G401 (cell line): ENCODE measurements at regions of chr10 and their contacts with region 1.

Region 1: DNA sequence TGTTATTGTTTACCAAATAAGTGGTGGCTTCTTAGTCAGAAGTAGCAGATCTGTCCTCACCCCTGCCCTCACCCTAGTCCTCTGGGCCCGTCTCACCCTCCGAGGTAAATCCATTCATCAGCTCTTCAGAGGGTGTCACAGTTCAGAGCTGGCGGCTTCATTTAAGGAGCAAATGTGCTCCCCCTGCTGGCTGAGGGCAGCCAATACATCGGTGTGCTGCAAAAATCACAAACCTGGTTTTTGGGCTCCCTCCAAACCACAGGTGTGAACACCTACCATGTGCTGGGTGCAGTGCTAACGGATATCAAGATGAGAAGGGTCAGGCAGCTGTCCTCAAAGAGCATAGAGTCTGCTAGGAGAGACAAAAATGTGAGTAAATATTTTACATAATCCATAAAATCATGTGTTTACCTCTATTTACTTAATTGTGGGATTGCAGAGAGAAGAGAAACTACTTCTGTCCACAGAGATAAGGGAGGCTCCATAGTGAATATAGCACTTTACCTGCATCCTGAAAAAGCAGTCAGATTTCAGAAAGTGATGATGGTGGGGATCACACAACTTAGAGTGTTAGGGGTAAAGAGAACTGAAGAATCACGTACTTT is 15.5 kb upstream of the CRTAC1 start:
- DNase-seq: peak; percentile 85

Region 2: DNA sequence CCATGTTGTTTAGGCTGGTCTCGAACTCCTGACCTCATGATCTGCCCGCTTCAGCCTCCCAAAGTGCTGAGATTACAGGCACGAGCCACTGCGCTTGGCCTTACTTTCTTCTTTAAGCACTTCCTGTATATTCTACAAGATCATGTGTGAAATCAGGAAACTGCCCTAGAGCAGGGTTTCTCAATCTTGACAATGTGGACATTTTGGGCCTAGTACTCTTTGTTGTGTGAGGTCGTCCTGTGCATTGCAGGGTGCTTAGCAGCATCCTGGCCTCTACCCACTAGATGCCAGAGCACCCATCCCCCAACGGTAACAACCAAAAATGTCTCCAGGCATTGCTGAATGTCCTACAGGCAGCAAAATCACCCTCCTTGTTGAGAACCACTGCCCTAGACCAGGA is 669.5 kb before region 1 on chr10:
- in situ Hi-C with region 1: no loop called
- DNase-seq: no peak

Region 3: GRCh38 chr10:97771055-97771811 is 274.7 kb before region 1 on chr10:
- in situ Hi-C with region 1: loop called (anchors 10 kb)
- DNase-seq: peak; percentile 24

Region 4: DNA sequence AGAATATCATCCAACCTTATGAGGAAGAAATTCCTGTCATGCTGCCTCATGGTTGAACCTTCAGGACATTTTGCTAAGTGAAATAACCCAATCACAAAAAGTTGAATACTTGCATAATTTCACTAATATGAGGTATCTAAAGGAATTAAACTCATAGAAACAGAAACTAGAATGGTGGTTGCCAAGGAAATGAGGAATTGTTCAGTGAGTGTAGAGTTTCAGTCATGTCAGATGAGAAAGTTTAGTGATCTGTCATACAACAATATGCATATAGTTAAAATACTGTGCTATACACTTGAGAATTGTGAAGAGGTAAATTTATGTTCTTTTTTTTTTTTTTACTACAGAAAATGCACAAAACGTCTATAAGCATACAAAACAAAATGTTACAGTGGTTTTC is 149.2 kb after region 1 on chr10:
- in situ Hi-C with region 1: no loop called
- DNase-seq: no peak

Region 5: DNA sequence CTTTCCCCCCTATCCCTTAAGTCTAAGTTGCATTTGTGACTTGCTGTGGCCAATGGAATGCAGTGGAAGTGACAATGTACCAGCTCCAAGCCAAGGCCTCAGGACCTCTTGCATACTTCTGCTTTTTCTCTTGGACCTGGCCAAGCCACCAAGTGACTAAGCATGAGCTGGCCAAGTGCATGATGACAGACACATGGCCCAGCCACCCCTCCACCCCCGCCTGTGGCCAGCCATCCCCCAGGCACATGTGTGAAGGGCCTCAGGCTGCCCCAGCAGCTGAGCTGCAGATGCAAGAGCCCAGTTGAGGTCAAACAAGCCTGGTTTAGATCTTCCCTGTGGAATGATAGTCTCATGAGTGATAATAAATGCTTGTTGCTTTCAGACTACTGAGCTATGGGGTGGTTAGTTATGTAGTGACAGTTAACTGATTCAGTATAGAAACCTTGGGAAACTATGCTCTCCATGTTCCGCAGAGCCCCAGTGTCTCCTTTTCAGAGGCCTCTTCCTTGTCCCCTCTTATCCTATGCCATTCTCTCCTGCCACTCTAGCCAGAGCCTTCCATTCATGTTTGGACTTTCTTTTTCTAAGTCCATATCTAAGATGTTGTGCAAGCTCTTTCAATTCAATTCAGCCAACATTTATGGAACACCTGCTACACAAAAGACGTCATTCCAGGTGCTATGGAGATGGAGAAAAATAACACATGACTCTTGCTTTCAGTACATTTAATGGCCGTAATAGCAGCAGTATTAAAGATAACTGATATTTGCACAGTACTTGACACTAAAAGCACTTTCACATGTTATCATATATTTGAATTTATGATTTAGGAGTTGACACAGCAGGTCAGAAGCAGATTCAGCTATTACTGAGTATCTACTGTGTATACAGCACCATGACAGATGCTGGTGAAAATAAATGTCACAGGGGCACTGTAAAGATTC is 277.6 kb after region 1 on chr10:
- in situ Hi-C with region 1: no loop called
- DNase-seq: no peak

Region 6: DNA sequence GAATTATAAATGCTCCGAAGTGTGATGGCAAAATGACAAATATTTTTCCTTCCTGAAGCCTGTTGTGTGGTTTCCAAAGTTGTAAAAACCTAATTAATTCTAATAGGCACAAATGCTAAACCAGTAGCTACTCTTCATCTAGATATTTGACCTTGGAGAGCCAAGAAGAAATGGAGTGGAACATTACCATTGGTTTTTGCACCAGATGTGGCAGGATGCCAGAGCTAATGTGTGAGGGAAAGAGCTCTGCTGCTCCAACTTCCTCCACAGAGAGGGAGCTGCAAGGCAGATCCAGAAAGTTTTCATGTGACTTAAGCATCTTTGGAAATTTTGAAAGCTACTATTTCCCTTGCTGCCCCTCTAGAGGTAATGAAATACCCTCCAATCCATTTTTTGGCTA is 466.0 kb after region 1 on chr10:
- in situ Hi-C with region 1: no loop called
- DNase-seq: no peak